H1 (cell line): ENCODE measurements at regions of chr17 and their contacts with region 1.

Region 1: DNA sequence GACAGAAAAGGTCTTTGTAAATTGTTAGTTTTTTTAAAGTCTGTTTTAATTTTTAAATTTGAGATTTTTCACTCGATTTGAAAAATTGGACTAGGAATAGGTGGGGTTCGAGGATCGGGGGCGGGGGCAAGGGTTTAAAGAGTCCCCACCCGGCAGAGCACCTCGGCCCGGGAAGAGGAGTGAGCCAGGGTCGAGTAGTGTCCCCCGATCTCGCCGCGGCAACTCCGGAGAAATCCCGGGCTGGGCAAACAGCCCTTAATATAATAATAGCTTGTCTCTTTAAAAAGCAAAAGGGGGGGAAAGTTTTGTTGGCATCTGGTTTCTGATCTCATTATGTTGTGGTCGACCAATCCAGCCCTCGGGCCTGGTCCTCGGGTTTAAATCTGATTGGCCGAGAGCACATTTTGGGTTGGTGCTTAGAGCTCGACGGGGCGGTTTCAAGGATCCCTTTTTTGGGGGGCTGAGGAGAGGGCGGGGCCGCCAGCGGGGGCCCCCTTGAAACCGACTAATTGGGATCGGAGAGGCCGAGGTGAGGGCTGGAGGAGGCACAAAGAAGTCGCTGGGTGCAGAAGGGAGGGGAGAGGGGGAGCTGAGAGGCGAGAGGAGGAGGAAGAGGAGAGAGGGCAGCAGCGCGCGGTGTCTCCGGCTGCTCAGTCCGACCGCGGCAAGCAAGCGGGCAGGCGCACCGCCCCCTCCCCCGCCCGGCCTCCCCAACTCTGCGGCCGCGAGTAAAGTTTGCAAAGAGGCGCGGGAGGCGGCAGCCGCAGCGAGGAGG is at the start of gene FZD2:
- DNase-seq: peak; percentile 93 to 94
- H3K4me3 ChIP-seq: peak within 1 kb of the TSS; percentile 53 to 78 (median 75)
- H3K27ac ChIP-seq: peak within 1 kb of the TSS; percentile 82
- H3K4me1 ChIP-seq: peaks cover 4 to 23% (median 19%) of the 10 kb centered on the region in 4 experiments
- H3K27me3 ChIP-seq: peaks cover 7 to 36% (median 27%) of the 10 kb centered on the region in 4 experiments; a peak in 6 of 7 replicates
- CTCF ChIP-seq: no peak
- EP300 ChIP-seq: peak in 1 of 2 experiments; percentile 61; a peak in 1 of 3 replicates
- POLR2A ChIP-seq: peak; percentile 35 to 79
- RAD21 ChIP-seq: peak; percentile 14 to 19; a peak in 3 of 4 replicates
- total RNA-seq, gene FZD2: 17.0 and 17.6 TPM in 2 replicates

Region 2: DNA sequence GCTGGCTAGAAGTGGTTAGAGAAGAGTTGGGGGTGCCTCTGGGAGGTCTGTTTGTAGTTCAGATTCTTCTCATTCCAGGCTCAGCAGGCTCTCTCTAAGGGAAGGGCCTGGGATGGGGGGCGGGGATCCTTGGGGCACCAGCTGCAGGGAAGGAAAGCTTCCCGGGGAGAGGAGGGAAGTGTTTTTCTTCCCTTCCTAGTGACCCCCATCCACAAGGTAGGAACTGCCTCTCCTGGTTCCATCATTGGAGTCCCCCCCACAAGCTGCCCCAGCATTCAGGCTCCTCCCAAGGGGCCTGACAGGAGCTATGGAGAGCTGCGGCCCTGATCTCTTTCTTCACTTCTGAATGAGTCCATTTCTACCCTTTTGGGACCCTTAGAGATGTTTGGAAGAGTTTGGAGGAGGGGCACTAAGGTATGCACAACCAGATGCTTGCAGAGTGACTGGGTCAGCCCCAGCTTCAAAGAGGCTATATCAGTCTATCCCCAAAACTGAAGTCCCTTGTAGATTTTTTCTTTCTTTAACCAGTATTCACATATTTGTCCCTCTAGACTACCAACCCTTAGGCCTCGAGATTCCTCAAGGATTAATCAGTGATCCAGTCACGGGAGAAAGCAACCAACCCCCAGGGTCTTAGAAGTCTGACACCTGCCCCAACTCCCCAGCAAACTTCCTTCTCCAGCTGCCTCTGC is 13.7 kb before region 1 on chr17:
- CTCF ChIA-PET with region 1: interaction called, 68 read pairs
- POLR2A ChIA-PET with region 1: interaction called, 219 read pairs
- DNase-seq: peak; percentile 85 to 87
- H3K4me3 ChIP-seq: peak overlapping the region; percentile 12 to 50 (median 22); a peak in 5 of 8 replicates
- H3K27ac ChIP-seq: no peak overlapping the region
- H3K4me1 ChIP-seq: peaks cover 34 to 62% (median 48%) of the 10 kb centered on the region in 4 experiments
- H3K27me3 ChIP-seq: peaks cover 10 to 60% (median 34%) of the 10 kb centered on the region in 4 experiments
- CTCF ChIP-seq: no peak
- EP300 ChIP-seq: peak; percentile 41 to 98
- POLR2A ChIP-seq: no peak
- RAD21 ChIP-seq: peak; percentile 16 to 27; a peak in 1 of 4 replicates